MCF 10A (cell line): ENCODE measurements at regions of chr19 and their contacts with region 1.

Region 1: GRCh38 chr19:7852851-7853769 is 21.1 kb downstream of the PRR36 start:
- DNase-seq: peak; percentile 82
- H3K4me3 Mint-ChIP-seq: no peak overlapping the region
- H3K27ac Mint-ChIP-seq: no peak overlapping the region
- H3K4me1 Mint-ChIP-seq: peaks cover 8% of the 10 kb centered on the region
- H3K27me3 Mint-ChIP-seq: no peaks in the 10 kb centered on the region
- CTCF ChIP-seq: peak; percentile 96

Region 2: GRCh38 chr19:7257148-7258034 is 595.7 kb before region 1 on chr19:
- CTCF ChIA-PET with region 1: no interaction called
- POLR2A ChIA-PET with region 1: no interaction called
- intact Hi-C with region 1: no loop called
- DNase-seq: peak; percentile 49
- H3K4me3 Mint-ChIP-seq: peak overlapping the region; percentile 44
- H3K27ac Mint-ChIP-seq: no peak overlapping the region
- H3K4me1 Mint-ChIP-seq: peaks cover 9% of the 10 kb centered on the region
- H3K27me3 Mint-ChIP-seq: no peaks in the 10 kb centered on the region
- CTCF ChIP-seq: no peak

Region 3: DNA sequence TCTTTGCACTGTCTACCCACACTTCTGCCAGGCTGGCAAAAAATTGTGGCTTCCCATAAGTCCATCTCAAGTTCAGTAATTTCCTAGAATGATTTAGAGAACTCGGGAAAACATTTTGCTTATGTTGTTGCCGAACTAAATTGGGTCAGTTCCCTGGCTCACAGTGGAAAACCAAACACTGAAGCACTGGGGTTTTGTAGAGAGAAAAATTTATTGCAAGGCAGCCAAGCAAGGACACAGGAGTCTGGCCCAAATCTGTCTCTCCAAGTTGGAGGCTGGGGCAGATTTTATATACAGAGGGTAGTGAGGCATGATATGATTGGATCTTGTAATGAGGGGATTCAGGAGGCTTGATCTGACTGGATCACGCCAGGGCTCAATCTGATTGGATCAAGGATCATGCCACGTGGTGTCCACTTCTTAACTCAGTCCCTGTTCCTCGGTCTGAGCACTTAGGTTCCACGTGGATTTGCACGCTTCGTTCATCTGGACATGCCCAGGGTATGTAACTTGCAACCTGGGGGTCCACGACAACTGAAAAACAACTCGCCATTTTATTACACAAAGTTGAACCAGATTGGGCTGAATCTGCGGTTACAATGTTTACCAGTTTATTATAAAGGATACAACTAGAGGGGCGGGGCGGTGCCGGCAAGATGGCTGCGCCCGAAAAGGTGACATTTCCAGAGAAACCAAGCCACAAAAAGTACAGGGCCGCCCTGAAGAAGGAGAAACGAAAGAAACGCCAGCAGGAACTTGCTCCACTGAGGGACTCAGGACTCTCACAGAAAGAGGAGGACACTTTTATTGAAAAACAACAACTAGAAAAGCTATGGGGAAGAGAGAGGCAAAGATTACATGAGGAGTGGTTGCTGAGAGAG is 113.1 kb before region 1 on chr19:
- CTCF ChIA-PET with region 1: no interaction called
- POLR2A ChIA-PET with region 1: no interaction called
- intact Hi-C with region 1: no loop called
- DNase-seq: no peak
- H3K4me3 Mint-ChIP-seq: no peak overlapping the region
- H3K27ac Mint-ChIP-seq: no peak overlapping the region
- H3K4me1 Mint-ChIP-seq: peaks cover 6% of the 10 kb centered on the region
- H3K27me3 Mint-ChIP-seq: peaks cover 95% of the 10 kb centered on the region
- CTCF ChIP-seq: no peak

Region 4: GRCh38 chr19:7831452-7831851 is 21.7 kb before region 1 on chr19:
- CTCF ChIA-PET with region 1: interaction called, 11 read pairs
- POLR2A ChIA-PET with region 1: no interaction called
- intact Hi-C with region 1: no loop called
- DNase-seq: peak; percentile 68
- H3K4me3 Mint-ChIP-seq: peak overlapping the region; percentile 78
- H3K27ac Mint-ChIP-seq: peak overlapping the region; percentile 97
- H3K4me1 Mint-ChIP-seq: peaks cover 32% of the 10 kb centered on the region
- H3K27me3 Mint-ChIP-seq: no peaks in the 10 kb centered on the region
- CTCF ChIP-seq: peak; percentile 33

Region 5: GRCh38 chr19:7928736-7929701 is 75.9 kb after region 1 on chr19:
- CTCF ChIA-PET with region 1: interaction called, 11 read pairs
- POLR2A ChIA-PET with region 1: interaction called, 3 read pairs
- intact Hi-C with region 1: no loop called
- DNase-seq: peak; percentile 82
- H3K4me3 Mint-ChIP-seq: peak overlapping the region; percentile 62
- H3K27ac Mint-ChIP-seq: peak overlapping the region; percentile 93
- H3K4me1 Mint-ChIP-seq: peaks cover 13% of the 10 kb centered on the region
- H3K27me3 Mint-ChIP-seq: no peaks in the 10 kb centered on the region
- CTCF ChIP-seq: peak; percentile 34